K562 (cell line): ENCODE measurements at regions of chr12 and their contacts with region 1.

Region 1: DNA sequence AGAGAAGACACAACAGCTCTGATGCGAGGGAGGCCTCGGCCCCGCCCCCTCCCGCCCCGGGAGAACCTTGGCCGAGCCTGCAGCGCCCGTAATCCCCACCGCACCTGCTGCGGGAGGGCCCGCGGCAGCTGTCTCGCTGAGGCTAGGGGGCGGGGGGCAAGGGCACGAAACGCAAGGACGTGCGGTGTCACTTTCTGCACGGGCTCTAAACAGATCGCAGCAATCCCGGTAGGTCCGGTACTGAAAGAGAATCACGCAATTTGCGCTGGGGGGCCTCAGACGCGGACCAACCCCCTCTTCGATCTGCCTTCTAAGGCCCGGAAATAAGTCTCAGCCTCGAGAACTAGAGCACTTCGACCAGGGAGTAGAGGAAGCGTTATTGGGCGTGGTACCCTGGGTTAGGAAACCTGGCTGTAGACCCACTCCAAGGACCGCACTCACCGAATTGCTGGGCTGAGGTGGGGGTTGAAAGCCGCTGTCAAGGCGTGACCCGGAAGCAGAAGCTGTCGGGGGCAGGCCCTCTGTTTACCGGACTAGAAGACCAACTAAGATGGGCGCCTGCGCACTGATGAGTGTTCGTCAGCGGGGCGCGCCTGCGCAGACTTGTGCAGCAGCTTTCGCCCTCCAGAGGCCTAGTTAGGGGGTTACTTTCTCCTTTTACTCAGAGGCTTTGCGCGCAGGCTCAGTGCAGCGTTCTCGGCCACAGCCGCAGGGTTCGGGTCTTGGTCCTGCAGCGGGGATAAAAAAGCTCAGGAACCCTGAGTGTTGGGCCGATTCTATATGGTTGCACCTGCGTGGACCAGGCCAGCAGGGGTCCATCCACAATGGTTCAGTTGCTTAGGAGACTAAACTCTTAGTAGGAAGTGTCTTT is at the start of gene ASB8:
- DNase-seq: peak; percentile 97 to 99 (median 98)
- ATAC-seq: peak; percentile 95
- H3K4me3 ChIP-seq: peak within 1 kb of the TSS; percentile 72
- H3K27ac ChIP-seq: peak within 1 kb of the TSS; percentile 80
- H3K4me1 ChIP-seq: peaks cover 4 to 15% of the 10 kb centered on the region in 2 experiments
- H3K27me3 ChIP-seq: no peaks in the 10 kb centered on the region
- CTCF ChIP-seq: peak; percentile 63 to 70 (median 68)
- EP300 ChIP-seq: no peak; the same call in 1 of the 2 replicates
- POLR2A ChIP-seq: peak; percentile 73
- RAD21 ChIP-seq: peak; percentile 6 to 24; a peak in 2 of 4 replicates
- polyA plus RNA-seq, gene ASB8: 20.0 to 29.0 TPM

Region 2: GRCh38 chr12:47773062-47773857 is 384.0 kb before region 1 on chr12 and contains the start of gene SLC48A1:
- CTCF ChIA-PET with region 1: no interaction called
- POLR2A ChIA-PET with region 1: no interaction called
- in situ Hi-C with region 1: no loop called
- intact Hi-C with region 1: no loop called
- DNase-seq: peak; percentile 84 to 95 (median 94)
- ATAC-seq: peak; percentile 81
- H3K4me3 ChIP-seq: peak within 1 kb of the TSS; percentile 83
- H3K27ac ChIP-seq: peak within 1 kb of the TSS; percentile 92
- H3K4me1 ChIP-seq: peaks cover 53 to 67% of the 10 kb centered on the region in 2 experiments
- H3K27me3 ChIP-seq: no peaks in the 10 kb centered on the region
- CTCF ChIP-seq: peak in 2 of 3 experiments; percentile 52 to 71; a peak in 4 of 6 replicates
- EP300 ChIP-seq: no peak
- POLR2A ChIP-seq: peak; percentile 51; the same call in 1 of the 2 replicates
- RAD21 ChIP-seq: no peak
- polyA plus RNA-seq, gene SLC48A1: 23.5 to 26.9 TPM

Region 3: DNA sequence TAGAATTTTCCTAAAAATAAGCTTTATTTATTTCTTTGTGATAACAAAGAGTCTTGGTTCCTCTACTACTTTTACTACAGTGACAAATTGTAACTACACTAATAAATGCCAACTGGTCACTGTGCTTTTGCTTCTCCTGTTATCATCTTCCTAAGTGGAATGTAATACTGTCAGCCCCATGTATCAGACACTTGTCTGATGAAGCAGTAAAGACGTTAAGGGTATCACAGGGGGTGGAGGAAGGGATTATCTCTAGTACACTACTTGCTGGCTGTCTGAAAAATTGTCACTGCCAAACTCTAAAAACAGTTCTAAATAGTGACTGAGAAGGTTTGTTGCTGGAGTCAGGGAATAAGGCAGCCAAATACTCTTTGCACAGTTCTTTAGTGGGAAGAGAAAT is 11.3 kb before region 1 on chr12:
- CTCF ChIA-PET with region 1: no interaction called
- POLR2A ChIA-PET with region 1: interaction called, 15 read pairs
- in situ Hi-C with region 1: no loop called
- intact Hi-C with region 1: no loop called
- DNase-seq: no peak
- ATAC-seq: no peak
- H3K4me3 ChIP-seq: no peak overlapping the region
- H3K27ac ChIP-seq: no peak overlapping the region
- H3K4me1 ChIP-seq: peaks cover 0 to 4% of the 10 kb centered on the region in 2 experiments; a peak in 1 of 5 replicates
- H3K27me3 ChIP-seq: no peaks in the 10 kb centered on the region
- CTCF ChIP-seq: no peak
- EP300 ChIP-seq: no peak
- POLR2A ChIP-seq: no peak
- RAD21 ChIP-seq: no peak

Region 4: DNA sequence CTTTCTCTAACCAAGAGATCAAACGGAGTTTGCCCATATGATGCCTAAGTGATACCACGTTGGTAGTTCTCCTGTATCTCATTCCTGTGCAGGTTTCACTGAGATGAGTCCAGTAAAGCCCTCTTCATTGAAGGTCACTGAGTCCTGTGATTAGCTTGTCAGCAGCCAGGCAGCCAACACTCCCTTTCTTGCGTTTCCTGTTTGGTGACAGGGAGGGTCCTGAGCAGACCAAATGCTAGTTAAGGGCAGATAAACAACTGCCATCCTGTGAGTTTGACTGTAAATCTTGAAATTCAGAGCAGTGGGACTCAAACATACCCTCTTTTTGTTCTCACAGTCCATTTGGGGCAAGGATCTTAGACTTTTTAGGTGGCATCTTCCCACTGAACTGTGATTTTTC is 154.1 kb after region 1 on chr12:
- CTCF ChIA-PET with region 1: no interaction called
- POLR2A ChIA-PET with region 1: no interaction called
- in situ Hi-C with region 1: no loop called
- intact Hi-C with region 1: no loop called
- DNase-seq: peak in 2 of 4 experiments; percentile 57 to 70
- ATAC-seq: peak; percentile 93
- H3K4me3 ChIP-seq: no peak overlapping the region
- H3K27ac ChIP-seq: peak overlapping the region; percentile 62
- H3K4me1 ChIP-seq: peaks cover 0 to 20% of the 10 kb centered on the region in 2 experiments; a peak in 4 of 5 replicates
- H3K27me3 ChIP-seq: no peaks in the 10 kb centered on the region
- CTCF ChIP-seq: no peak
- EP300 ChIP-seq: peak; percentile 88
- POLR2A ChIP-seq: no peak
- RAD21 ChIP-seq: no peak